B cell (primary cell): ENCODE measurements at regions of chr19 and their contacts with region 1.

Region 1: GRCh38 chr19:11293433-11294389 is 2.2 kb upstream of the TSPAN16 start:
- DNase-seq: peak; percentile 82
- ATAC-seq: peak; percentile 99
- H3K4me3 ChIP-seq: no peak overlapping the region
- H3K4me3 Mint-ChIP-seq: peak overlapping the region; percentile 73
- H3K27ac ChIP-seq: no peak overlapping the region
- H3K27ac Mint-ChIP-seq: peak overlapping the region; percentile 63
- H3K4me1 ChIP-seq: peaks cover 0 to 10% of the 10 kb centered on the region in 2 donors
- H3K4me1 Mint-ChIP-seq: peaks cover 8% of the 10 kb centered on the region
- H3K27me3 ChIP-seq: peaks cover 0 to 14% (median 0%) of the 10 kb centered on the region in 4 experiments
- H3K27me3 Mint-ChIP-seq: peaks cover 24% of the 10 kb centered on the region
- CTCF ChIP-seq: peak; percentile 98

Region 2: GRCh38 chr19:11324079-11324661 is 30.5 kb after region 1 on chr19:
- CTCF ChIA-PET with region 1: interaction called, 10 read pairs
- POLR2A ChIA-PET with region 1: no interaction called
- intact Hi-C with region 1: no loop called
- DNase-seq: peak; percentile 61
- ATAC-seq: peak; percentile 57
- H3K4me3 ChIP-seq: peak overlapping the region in 1 of 5 experiments; percentile 21
- H3K4me3 Mint-ChIP-seq: peak overlapping the region; percentile 75
- H3K27ac ChIP-seq: peak overlapping the region in 1 of 2 donors; percentile 61
- H3K27ac Mint-ChIP-seq: peak overlapping the region; percentile 68
- H3K4me1 ChIP-seq: peaks cover 31 to 43% of the 10 kb centered on the region in 2 donors
- H3K4me1 Mint-ChIP-seq: peaks cover 38% of the 10 kb centered on the region
- H3K27me3 ChIP-seq: peaks cover 0 to 5% (median 0%) of the 10 kb centered on the region in 4 experiments
- H3K27me3 Mint-ChIP-seq: no peaks in the 10 kb centered on the region
- CTCF ChIP-seq: no peak

Region 3: GRCh38 chr19:11446652-11447301 is 153.1 kb after region 1 on chr19:
- CTCF ChIA-PET with region 1: interaction called, 13 read pairs
- POLR2A ChIA-PET with region 1: interaction called, 3 read pairs
- intact Hi-C with region 1: no loop called
- DNase-seq: peak; percentile 69
- ATAC-seq: peak; percentile 76
- H3K4me3 ChIP-seq: no peak overlapping the region
- H3K4me3 Mint-ChIP-seq: no peak overlapping the region
- H3K27ac ChIP-seq: no peak overlapping the region
- H3K27ac Mint-ChIP-seq: no peak overlapping the region
- H3K4me1 ChIP-seq: no peaks in the 10 kb centered on the region
- H3K4me1 Mint-ChIP-seq: no peaks in the 10 kb centered on the region
- H3K27me3 ChIP-seq: no peaks in the 10 kb centered on the region
- H3K27me3 Mint-ChIP-seq: no peaks in the 10 kb centered on the region
- CTCF ChIP-seq: peak; percentile 77

Region 4: DNA sequence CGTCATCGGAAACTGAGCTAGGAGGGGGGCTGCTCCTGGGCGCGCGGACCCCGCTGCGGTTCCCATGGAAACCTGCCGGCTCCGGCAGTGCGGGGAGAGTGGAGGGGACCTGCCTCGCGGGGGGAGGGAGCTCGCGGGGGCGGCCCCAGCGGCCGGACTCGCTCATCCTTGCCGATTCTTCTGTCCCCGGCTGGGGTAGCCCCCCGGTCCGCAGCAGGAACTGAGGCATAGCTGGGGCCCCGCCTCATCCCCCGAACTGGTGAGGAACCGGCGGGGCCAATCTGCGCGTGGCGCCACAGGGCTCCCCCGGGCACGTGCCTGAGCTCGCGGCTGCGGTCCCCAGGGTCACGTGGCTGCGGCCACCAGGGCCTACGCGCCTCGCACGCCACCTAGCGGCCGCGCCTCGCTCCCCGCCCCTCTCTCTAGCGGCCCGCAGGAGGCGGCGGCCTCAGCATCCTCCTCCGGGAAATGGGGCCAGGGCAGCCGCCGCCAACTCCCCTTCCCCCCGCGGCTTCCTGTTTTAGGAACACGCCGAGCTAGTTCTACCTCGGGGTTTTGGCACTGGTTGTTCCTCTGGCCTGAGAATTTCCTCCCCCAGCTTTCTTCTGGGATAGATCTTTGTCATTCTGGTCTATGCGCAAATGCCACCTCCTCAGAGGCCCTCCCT is 188.8 kb after region 1 on chr19:
- CTCF ChIA-PET with region 1: interaction called, 38 read pairs
- POLR2A ChIA-PET with region 1: no interaction called
- intact Hi-C with region 1: loop called (anchors 1 kb)
- DNase-seq: peak; percentile 93
- ATAC-seq: peak; percentile 79
- H3K4me3 ChIP-seq: peak overlapping the region in 4 of 5 experiments; percentile 20 to 48 (median 30)
- H3K4me3 Mint-ChIP-seq: peak overlapping the region; percentile 80
- H3K27ac ChIP-seq: no peak overlapping the region
- H3K27ac Mint-ChIP-seq: peak overlapping the region; percentile 80
- H3K4me1 ChIP-seq: peaks cover 37 to 42% of the 10 kb centered on the region in 2 donors
- H3K4me1 Mint-ChIP-seq: peaks cover 27% of the 10 kb centered on the region
- H3K27me3 ChIP-seq: peaks cover 0 to 46% (median 25%) of the 10 kb centered on the region in 4 experiments
- H3K27me3 Mint-ChIP-seq: peaks cover 34% of the 10 kb centered on the region
- CTCF ChIP-seq: peak; percentile 93